GM12878 (cell line): ENCODE measurements at regions of chr5 and their contacts with region 1.

Region 1: GRCh38 chr5:78757269-78758053 is 108.9 kb upstream of the LHFPL2 start:
- DNase-seq: peak; percentile 66
- ATAC-seq: peak; percentile 61
- H3K4me3 ChIP-seq: peak overlapping the region; percentile 10; the same call in 1 of the 2 replicates
- H3K27ac ChIP-seq: peak overlapping the region; percentile 97
- H3K4me1 ChIP-seq: peaks cover 65% of the 10 kb centered on the region
- H3K27me3 ChIP-seq: no peaks in the 10 kb centered on the region
- CTCF ChIP-seq: no peak
- EP300 ChIP-seq: peak; percentile 29 to 74; a peak in 3 of 4 replicates
- POLR2A ChIP-seq: no peak
- RAD21 ChIP-seq: no peak

Region 2: GRCh38 chr5:78547731-78548615 is 209.5 kb before region 1 on chr5:
- CTCF ChIA-PET with region 1: interaction called, 4 read pairs
- POLR2A ChIA-PET with region 1: interaction called, 5 read pairs
- RAD21 ChIA-PET with region 1: interaction called, 6 read pairs
- SMC1A ChIA-PET with region 1: interaction called, 11 read pairs
- in situ Hi-C with region 1: no loop called
- intact Hi-C with region 1: loop called (anchors 10 kb)
- DNase-seq: no peak
- ATAC-seq: no peak
- H3K4me3 ChIP-seq: no peak overlapping the region
- H3K27ac ChIP-seq: peak overlapping the region; percentile 41; the same call in 1 of the 2 replicates
- H3K4me1 ChIP-seq: peaks cover 59% of the 10 kb centered on the region
- H3K27me3 ChIP-seq: no peaks in the 10 kb centered on the region
- CTCF ChIP-seq: no peak
- EP300 ChIP-seq: no peak
- POLR2A ChIP-seq: 0 out of 2 replicates have a peak, but pooled peaks have one; percentile 2
- RAD21 ChIP-seq: no peak

Region 3: GRCh38 chr5:78648359-78649210 is 108.9 kb before region 1 on chr5 and contains the start of gene LHFPL2:
- CTCF ChIA-PET with region 1: interaction called, 4 read pairs
- POLR2A ChIA-PET with region 1: interaction called, 5 read pairs
- RAD21 ChIA-PET with region 1: interaction called, 5 read pairs
- SMC1A ChIA-PET with region 1: interaction called, 11 read pairs
- in situ Hi-C with region 1: no loop called
- intact Hi-C with region 1: loop called (anchors 2 kb)
- DNase-seq: no peak
- ATAC-seq: peak; percentile 66
- H3K4me3 ChIP-seq: peak within 1 kb of the TSS; percentile 76
- H3K27ac ChIP-seq: peak within 1 kb of the TSS; percentile 78
- H3K4me1 ChIP-seq: peaks cover 19% of the 10 kb centered on the region
- H3K27me3 ChIP-seq: no peaks in the 10 kb centered on the region
- CTCF ChIP-seq: no peak
- EP300 ChIP-seq: no peak
- POLR2A ChIP-seq: peak; percentile 62
- RAD21 ChIP-seq: 0 out of 2 replicates have a peak, but pooled peaks have one; percentile 14
- polyA plus RNA-seq, gene LHFPL2: 4.1 to 4.5 TPM

Region 4: GRCh38 chr5:78727786-78728761 is 29.4 kb before region 1 on chr5:
- CTCF ChIA-PET with region 1: interaction called, 16 read pairs
- POLR2A ChIA-PET with region 1: interaction called, 22 read pairs
- RAD21 ChIA-PET with region 1: interaction called, 132 read pairs
- SMC1A ChIA-PET with region 1: interaction called, 100 read pairs
- in situ Hi-C with region 1: no loop called
- intact Hi-C with region 1: loop called (anchors 1 kb)
- DNase-seq: peak; percentile 96
- ATAC-seq: peak; percentile 91
- H3K4me3 ChIP-seq: peak overlapping the region; percentile 14; the same call in 1 of the 2 replicates
- H3K27ac ChIP-seq: peak overlapping the region; percentile 96
- H3K4me1 ChIP-seq: peaks cover 48% of the 10 kb centered on the region
- H3K27me3 ChIP-seq: no peaks in the 10 kb centered on the region
- CTCF ChIP-seq: no peak
- EP300 ChIP-seq: peak; percentile 92 to 95
- POLR2A ChIP-seq: no peak; the same call in 1 of the 2 replicates
- RAD21 ChIP-seq: no peak

Region 5: GRCh38 chr5:78771260-78772205 is 14.1 kb after region 1 on chr5:
- CTCF ChIA-PET with region 1: interaction called, 11 read pairs
- POLR2A ChIA-PET with region 1: interaction called, 9 read pairs
- RAD21 ChIA-PET with region 1: interaction called, 6 read pairs
- SMC1A ChIA-PET with region 1: interaction called, 12 read pairs
- in situ Hi-C with region 1: no loop called
- intact Hi-C with region 1: no loop called
- DNase-seq: no peak
- ATAC-seq: peak; percentile 62
- H3K4me3 ChIP-seq: 0 out of 2 replicates have a peak overlapping the region, but pooled peaks have one; percentile 15
- H3K27ac ChIP-seq: peak overlapping the region; percentile 43
- H3K4me1 ChIP-seq: peaks cover 16% of the 10 kb centered on the region
- H3K27me3 ChIP-seq: no peaks in the 10 kb centered on the region
- CTCF ChIP-seq: no peak
- EP300 ChIP-seq: no peak
- POLR2A ChIP-seq: no peak
- RAD21 ChIP-seq: no peak

Region 6: GRCh38 chr5:78841767-78842166 is 84.3 kb after region 1 on chr5:
- CTCF ChIA-PET with region 1: no interaction called
- POLR2A ChIA-PET with region 1: no interaction called
- RAD21 ChIA-PET with region 1: no interaction called
- SMC1A ChIA-PET with region 1: interaction called, 4 read pairs
- in situ Hi-C with region 1: no loop called
- intact Hi-C with region 1: loop called (anchors 5 kb)
- DNase-seq: no peak
- ATAC-seq: peak; percentile 58
- H3K4me3 ChIP-seq: no peak overlapping the region
- H3K27ac ChIP-seq: no peak overlapping the region
- H3K4me1 ChIP-seq: no peaks in the 10 kb centered on the region
- H3K27me3 ChIP-seq: no peaks in the 10 kb centered on the region
- CTCF ChIP-seq: no peak
- EP300 ChIP-seq: no peak
- POLR2A ChIP-seq: no peak
- RAD21 ChIP-seq: no peak

Region 7: DNA sequence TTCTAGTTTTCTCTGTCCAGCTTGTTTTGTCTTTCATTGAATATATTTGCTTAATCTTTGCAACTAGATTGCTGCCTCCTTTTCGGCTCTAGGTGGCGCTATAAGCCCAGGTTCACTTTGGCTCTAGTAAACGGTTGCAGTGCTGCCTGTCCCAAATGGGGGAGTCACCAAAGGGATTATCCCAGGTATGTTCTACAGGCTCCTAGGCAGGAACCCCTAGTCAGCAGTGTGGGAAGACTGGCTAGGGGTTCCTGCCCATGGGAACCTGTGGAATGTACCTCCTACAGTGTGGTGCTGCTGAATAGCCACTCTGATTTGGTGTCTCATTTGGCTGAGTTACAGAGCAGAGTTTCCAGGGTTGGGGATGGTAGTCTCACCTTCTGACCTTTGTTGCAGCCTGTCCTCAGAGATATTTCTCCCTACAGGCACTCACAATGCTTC is 142.5 kb after region 1 on chr5:
- CTCF ChIA-PET with region 1: interaction called, 13 read pairs
- POLR2A ChIA-PET with region 1: no interaction called
- RAD21 ChIA-PET with region 1: interaction called, 4 read pairs
- SMC1A ChIA-PET with region 1: interaction called, 6 read pairs
- in situ Hi-C with region 1: no loop called
- intact Hi-C with region 1: no loop called
- DNase-seq: no peak
- ATAC-seq: peak; percentile 88
- H3K4me3 ChIP-seq: no peak overlapping the region
- H3K27ac ChIP-seq: no peak overlapping the region
- H3K4me1 ChIP-seq: peaks cover 6% of the 10 kb centered on the region
- H3K27me3 ChIP-seq: no peaks in the 10 kb centered on the region
- CTCF ChIP-seq: peak; percentile 65 to 86 (median 77)
- EP300 ChIP-seq: no peak
- POLR2A ChIP-seq: no peak
- RAD21 ChIP-seq: peak; percentile 94

Region 8: GRCh38 chr5:79263290-79263689 is 505.8 kb after region 1 on chr5:
- CTCF ChIA-PET with region 1: no interaction called
- POLR2A ChIA-PET with region 1: no interaction called
- RAD21 ChIA-PET with region 1: no interaction called
- SMC1A ChIA-PET with region 1: no interaction called
- in situ Hi-C with region 1: no loop called
- intact Hi-C with region 1: no loop called
- DNase-seq: peak; percentile 34
- ATAC-seq: peak; percentile 62
- H3K4me3 ChIP-seq: no peak overlapping the region
- H3K27ac ChIP-seq: peak overlapping the region; percentile 43; the same call in 1 of the 2 replicates
- H3K4me1 ChIP-seq: peaks cover 14% of the 10 kb centered on the region
- H3K27me3 ChIP-seq: no peaks in the 10 kb centered on the region
- CTCF ChIP-seq: no peak
- EP300 ChIP-seq: no peak
- POLR2A ChIP-seq: no peak
- RAD21 ChIP-seq: no peak